Naive thymus-derived CD4-positive, alpha-beta T cell (primary cell): ENCODE measurements at regions of chr2 and their contacts with region 1.

Region 1: GRCh38 chr2:184336688-184337087 is 261.6 kb upstream of the ZNF804A start:
- DNase-seq: no peak
- ATAC-seq: no peak
- H3K4me3 ChIP-seq: no peak overlapping the region
- H3K4me3 Mint-ChIP-seq: no peak overlapping the region
- H3K27ac ChIP-seq: no peak overlapping the region
- H3K27ac Mint-ChIP-seq: no peak overlapping the region
- H3K4me1 ChIP-seq: no peaks in the 10 kb centered on the region
- H3K4me1 Mint-ChIP-seq: no peaks in the 10 kb centered on the region
- H3K27me3 ChIP-seq: no peaks in the 10 kb centered on the region
- H3K27me3 Mint-ChIP-seq: no peaks in the 10 kb centered on the region

Region 2: DNA sequence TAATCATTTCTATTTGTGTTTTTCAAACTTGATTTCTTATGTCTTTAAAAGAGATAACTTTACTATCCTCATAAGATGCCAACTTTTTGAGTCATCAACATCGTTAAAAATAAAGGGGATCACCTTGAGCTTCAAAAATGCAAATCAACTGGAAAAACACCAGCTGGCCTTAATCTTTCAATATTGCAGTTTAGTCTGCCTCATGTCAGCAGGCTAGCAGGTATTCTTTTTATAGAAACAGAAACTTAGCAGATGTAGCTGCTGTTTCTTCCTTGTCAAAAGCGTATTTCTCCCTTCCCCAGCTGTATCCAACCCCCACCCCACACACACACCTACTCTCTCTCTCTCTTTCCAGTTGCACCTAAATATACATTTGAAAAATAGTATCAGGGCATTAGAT is 107.5 kb after region 1 on chr2:
- CTCF ChIA-PET with region 1: no interaction called
- POLR2A ChIA-PET with region 1: no interaction called
- intact Hi-C with region 1: loop called in 1 of 2 experiments (anchors 5 kb)
- DNase-seq: no peak
- ATAC-seq: no peak
- H3K4me3 ChIP-seq: no peak overlapping the region
- H3K4me3 Mint-ChIP-seq: no peak overlapping the region
- H3K27ac ChIP-seq: no peak overlapping the region
- H3K27ac Mint-ChIP-seq: no peak overlapping the region
- H3K4me1 ChIP-seq: no peaks in the 10 kb centered on the region
- H3K4me1 Mint-ChIP-seq: no peaks in the 10 kb centered on the region
- H3K27me3 ChIP-seq: no peaks in the 10 kb centered on the region
- H3K27me3 Mint-ChIP-seq: no peaks in the 10 kb centered on the region